Activated CD8-positive, alpha-beta T cell treated with anti-CD3 and anti-CD28 coated beads, Interleukin-2, amount 10 ng/mL, durations not matched to agents 7 days and 5 days (primary cell): ENCODE measurements at regions of chr9 and their contacts with region 1.

Region 1: DNA sequence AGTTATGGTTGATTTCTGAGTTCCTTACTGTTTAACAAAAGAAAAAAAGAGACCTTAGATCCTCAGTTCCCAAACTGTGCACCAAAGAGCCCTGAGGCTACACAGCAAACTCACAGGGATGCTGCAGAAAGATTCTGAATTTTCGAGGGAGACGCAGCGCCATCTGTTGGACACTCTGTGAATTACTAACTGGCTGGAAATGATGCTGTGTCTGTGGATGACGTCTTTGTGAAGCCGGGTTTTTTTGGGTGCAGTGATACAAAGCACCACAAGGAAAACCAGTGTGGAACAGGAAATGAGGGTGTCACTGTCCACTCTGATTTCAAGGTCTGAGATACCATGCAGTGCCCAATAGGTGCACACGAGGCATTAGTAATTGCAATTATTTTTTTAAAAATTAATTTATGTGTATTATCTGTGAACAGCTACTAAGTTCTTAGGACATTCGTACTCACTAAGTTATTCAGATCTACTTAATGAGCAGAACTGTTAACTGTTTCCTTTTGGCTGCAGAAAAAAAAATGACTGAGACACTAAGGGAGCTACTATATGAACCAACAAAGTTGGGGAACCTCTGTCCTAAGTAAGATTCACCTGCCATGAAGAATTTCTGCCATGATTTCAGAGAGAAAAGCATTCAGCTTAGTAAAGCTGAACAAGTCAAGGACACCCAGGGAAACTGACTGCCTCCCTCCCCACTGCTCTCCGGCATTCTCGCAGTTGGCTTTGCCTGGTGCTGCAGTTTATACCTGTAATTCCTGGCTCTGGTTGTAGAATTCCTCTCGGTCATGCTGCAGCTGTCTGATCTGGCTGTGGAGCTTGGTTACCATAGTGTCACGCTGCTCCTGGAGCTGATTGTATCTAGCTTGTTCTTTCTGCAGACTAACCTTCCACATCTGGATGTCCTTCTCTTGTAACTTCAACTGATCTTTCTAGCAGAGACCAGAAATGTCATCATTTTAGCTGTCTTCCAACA is 23.4 kb downstream of the SPACA9 start:
- DNase-seq: peak; percentile 89
- ATAC-seq: peak; percentile 93
- H3K4me3 Mint-ChIP-seq: no peak overlapping the region
- H3K27ac Mint-ChIP-seq: peak overlapping the region; percentile 44
- H3K4me1 Mint-ChIP-seq: peaks cover 18% of the 10 kb centered on the region
- H3K27me3 Mint-ChIP-seq: no peaks in the 10 kb centered on the region

Region 2: GRCh38 chr9:132802121-132802795 is 99.9 kb before region 1 on chr9:
- CTCF ChIA-PET with region 1: interaction called, 12 read pairs
- POLR2A ChIA-PET with region 1: no interaction called
- DNase-seq: no peak
- ATAC-seq: no peak
- H3K4me3 Mint-ChIP-seq: no peak overlapping the region
- H3K27ac Mint-ChIP-seq: no peak overlapping the region
- H3K4me1 Mint-ChIP-seq: peaks cover 16% of the 10 kb centered on the region
- H3K27me3 Mint-ChIP-seq: peaks cover 8% of the 10 kb centered on the region

Region 3: GRCh38 chr9:132857616-132858342 is 44.4 kb before region 1 on chr9:
- CTCF ChIA-PET with region 1: interaction called, 11 read pairs
- POLR2A ChIA-PET with region 1: no interaction called
- DNase-seq: no peak
- ATAC-seq: no peak
- H3K4me3 Mint-ChIP-seq: no peak overlapping the region
- H3K27ac Mint-ChIP-seq: no peak overlapping the region
- H3K4me1 Mint-ChIP-seq: peaks cover 26% of the 10 kb centered on the region
- H3K27me3 Mint-ChIP-seq: peaks cover 8% of the 10 kb centered on the region

Region 4: DNA sequence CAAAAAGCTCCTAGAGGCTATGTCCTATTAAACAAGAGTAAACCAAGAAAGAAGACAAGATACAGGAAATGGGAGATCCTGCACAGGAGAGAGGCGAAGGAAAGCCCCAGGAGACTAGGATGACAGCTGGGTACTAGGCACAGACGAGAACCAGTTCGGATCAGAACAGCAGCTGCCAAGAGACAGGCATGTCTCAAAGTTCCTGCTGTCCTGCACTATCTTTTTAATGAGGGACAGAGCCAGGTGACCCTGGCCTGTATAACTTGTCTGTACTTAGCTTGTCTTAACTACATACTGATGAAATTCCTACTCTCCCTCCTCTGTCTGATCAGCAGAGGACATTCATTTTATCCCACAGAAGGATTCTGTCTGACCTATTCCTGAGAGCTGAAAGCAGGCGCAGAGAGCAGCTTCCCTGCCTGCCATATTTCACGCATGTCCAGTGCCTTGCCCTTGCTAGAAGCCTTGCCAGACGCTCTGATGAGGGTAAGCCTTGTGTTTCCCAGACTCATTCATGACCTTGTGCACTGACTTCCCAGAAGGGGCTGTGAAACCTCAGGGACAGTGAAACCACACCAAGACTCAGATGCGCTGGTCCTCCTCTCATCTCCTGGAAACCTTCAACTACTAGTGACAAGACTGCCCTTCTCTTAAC is 17.6 kb after region 1 on chr9:
- CTCF ChIA-PET with region 1: interaction called, 13 read pairs
- POLR2A ChIA-PET with region 1: interaction called, 3 read pairs
- DNase-seq: no peak
- ATAC-seq: no peak
- H3K4me3 Mint-ChIP-seq: no peak overlapping the region
- H3K27ac Mint-ChIP-seq: no peak overlapping the region
- H3K4me1 Mint-ChIP-seq: no peaks in the 10 kb centered on the region
- H3K27me3 Mint-ChIP-seq: no peaks in the 10 kb centered on the region

Region 5: GRCh38 chr9:132973713-132974112 is 71.6 kb after region 1 on chr9:
- CTCF ChIA-PET with region 1: interaction called, 12 read pairs
- POLR2A ChIA-PET with region 1: no interaction called
- DNase-seq: peak; percentile 27
- ATAC-seq: no peak
- H3K4me3 Mint-ChIP-seq: no peak overlapping the region
- H3K27ac Mint-ChIP-seq: no peak overlapping the region
- H3K4me1 Mint-ChIP-seq: peaks cover 10% of the 10 kb centered on the region
- H3K27me3 Mint-ChIP-seq: peaks cover 17% of the 10 kb centered on the region